Thyroid gland (tissue), 4 donors: ENCODE measurements at regions of chr14 and their contacts with region 1.

Region 1: DNA sequence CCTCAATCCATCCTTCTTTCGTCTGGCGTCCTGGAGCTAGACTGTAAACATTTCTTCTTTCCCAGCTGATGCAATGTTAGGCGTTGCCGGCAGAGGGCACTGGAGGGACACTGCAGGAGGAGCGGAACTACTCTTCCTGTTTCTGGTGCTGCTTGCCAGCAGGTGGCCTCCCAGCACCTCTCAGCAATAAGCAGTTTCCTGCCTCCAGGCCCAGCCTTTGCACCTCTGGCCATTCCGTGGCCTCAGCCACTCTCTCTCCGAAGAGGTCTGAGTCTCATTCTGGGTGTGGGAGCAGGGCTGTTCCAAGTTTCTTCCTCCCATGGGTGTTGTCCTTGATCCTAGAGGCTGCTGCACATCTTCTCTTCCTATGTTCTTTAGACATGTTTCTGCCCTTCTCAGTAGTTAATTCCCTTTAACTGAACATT is 7.5 kb upstream of the ASPG start:
- DNase-seq: peak; percentile 88 to 93
- H3K4me3 ChIP-seq: no peak overlapping the region
- H3K27ac ChIP-seq: no peak overlapping the region
- H3K4me1 ChIP-seq: peaks cover 13 to 26% of the 10 kb centered on the region in 2 donors
- H3K27me3 ChIP-seq: no peaks in the 10 kb centered on the region
- CTCF ChIP-seq: peak; percentile 98 to 100 (median 100)
- POLR2A ChIP-seq: no peak

Region 2: GRCh38 chr14:104034976-104035699 is 42.9 kb before region 1 on chr14:
- intact Hi-C with region 1: no loop called
- DNase-seq: peak; percentile 74 to 80
- H3K4me3 ChIP-seq: no peak overlapping the region
- H3K27ac ChIP-seq: peak overlapping the region; percentile 47 to 68 (median 62)
- H3K4me1 ChIP-seq: peaks cover 34 to 48% of the 10 kb centered on the region in 2 donors
- H3K27me3 ChIP-seq: no peaks in the 10 kb centered on the region
- CTCF ChIP-seq: no peak
- POLR2A ChIP-seq: peak in 1 of 2 donors; percentile 25

Region 3: GRCh38 chr14:104130974-104131651 is 53.1 kb after region 1 on chr14:
- intact Hi-C with region 1: loop called (anchors 2 kb)
- DNase-seq: peak; percentile 81 to 89
- H3K4me3 ChIP-seq: no peak overlapping the region
- H3K27ac ChIP-seq: no peak overlapping the region
- H3K4me1 ChIP-seq: peaks cover 4 to 10% of the 10 kb centered on the region in 2 donors
- H3K27me3 ChIP-seq: peaks cover 8% of the 10 kb centered on the region
- CTCF ChIP-seq: peak; percentile 31 to 93 (median 76)
- POLR2A ChIP-seq: no peak

Region 4: DNA sequence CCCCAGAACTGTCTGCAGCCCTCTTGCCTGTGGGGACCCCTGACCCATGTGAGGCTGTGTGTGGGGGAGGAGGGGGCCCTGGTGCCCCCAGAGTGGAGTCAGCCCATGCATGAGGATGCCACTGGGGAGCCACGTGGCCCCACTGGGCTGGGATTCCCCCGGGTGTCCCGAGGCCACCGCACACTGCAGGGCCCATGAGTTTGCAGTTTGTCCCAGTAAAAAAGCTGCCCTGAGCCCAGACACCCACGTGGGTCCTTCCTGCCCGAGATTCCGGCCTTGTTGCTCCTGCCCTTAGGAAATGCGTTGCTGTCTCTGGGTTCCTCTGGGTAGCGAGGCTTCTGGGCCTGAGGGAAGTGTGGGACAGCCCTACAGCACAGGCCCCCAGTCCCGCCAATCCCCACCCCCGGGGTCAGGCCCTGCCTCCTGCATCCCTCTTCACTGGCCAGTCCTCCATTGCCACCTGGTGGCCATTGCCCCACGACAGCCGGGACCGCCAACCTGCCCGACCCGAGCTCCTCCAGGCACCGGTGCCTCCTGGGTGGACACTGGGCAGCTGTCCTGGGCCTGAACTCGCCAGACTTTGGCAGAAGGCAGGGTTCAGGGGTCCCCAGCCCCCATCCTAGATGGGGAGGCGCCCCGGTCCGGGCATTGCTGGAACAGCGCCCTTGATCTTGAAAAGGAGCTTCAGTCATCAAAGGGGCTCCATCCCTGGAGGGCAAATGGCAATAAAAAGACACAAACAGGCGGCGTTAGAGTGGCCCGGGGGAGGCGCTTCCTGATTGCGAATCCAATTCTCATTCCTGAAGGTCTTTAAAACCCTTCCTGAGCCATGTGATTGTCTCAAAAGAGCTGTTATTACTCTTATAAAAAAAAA is 485.9 kb after region 1 on chr14:
- intact Hi-C with region 1: loop called (anchors 5 kb)
- DNase-seq: peak; percentile 73 to 77
- H3K4me3 ChIP-seq: no peak overlapping the region
- H3K27ac ChIP-seq: no peak overlapping the region
- H3K4me1 ChIP-seq: peaks cover 7 to 50% of the 10 kb centered on the region in 2 donors
- H3K27me3 ChIP-seq: no peaks in the 10 kb centered on the region
- CTCF ChIP-seq: peak; percentile 70 to 88 (median 82)
- POLR2A ChIP-seq: no peak